ENCODE measurements at regions of chr10 and their contacts with region 1.

Region 1: DNA sequence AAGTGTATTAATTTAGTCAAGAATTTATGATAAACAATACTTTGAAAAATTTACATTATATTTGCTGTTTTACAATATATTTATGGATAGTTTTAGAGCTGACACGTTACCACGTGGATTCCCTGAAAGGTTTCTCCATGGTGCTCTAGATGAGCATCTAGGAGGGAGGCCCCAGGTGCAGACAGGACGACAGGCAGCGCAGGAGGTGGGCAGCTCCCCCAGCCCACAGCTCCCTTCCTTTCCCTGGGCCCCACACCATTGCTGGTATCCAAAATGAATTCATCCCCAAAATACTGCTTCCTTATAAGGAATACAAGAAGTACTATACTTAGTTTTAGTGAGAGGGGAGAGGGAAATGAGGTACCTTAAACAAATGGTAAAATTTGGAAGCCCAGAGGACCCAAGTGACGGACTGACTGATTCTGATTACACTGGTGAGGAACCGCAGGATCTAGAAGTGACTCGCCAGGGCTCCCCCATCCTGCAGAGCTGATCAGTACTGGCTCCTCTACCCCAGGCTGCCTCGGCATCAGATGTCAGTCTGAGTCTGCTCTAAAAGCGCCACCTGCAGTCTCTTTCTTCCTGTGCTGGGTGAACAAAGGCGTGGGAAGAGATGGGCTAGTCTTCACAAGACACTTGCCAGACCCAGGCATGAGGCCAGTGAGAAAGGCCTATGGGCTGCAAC is 89.2 kb downstream of the DLG5 start:
- DNase-seq: peak; percentile 66
- H3K4me3 Mint-ChIP-seq: no peak overlapping the region
- H3K27ac Mint-ChIP-seq: peak overlapping the region; percentile 53
- H3K4me1 Mint-ChIP-seq: peaks cover 8% of the 10 kb centered on the region
- H3K27me3 Mint-ChIP-seq: no peaks in the 10 kb centered on the region

Region 2: DNA sequence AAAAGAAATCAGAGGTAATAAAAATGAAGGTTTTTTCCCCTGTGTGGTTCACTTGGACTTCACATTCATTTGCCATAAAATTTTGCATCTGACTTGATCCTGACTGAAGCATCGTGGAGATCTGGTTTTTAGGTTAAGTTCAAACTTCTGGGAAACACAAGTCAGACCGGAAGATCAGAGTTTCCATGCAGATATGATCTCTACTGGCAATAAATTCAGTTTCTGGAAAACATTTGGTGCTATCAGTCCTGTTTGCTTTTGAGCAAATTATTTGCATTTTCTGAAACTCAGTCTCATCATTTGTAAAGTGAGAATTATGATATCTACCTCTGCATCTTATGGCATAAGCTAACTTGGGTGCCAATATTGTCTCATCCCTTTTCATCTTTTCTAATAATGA is 118.4 kb before region 1 on chr10:
- intact Hi-C with region 1: loop called (anchors 1 kb)
- DNase-seq: no peak
- H3K4me3 Mint-ChIP-seq: no peak overlapping the region
- H3K27ac Mint-ChIP-seq: no peak overlapping the region
- H3K4me1 Mint-ChIP-seq: peaks cover 6% of the 10 kb centered on the region
- H3K27me3 Mint-ChIP-seq: peaks cover 4% of the 10 kb centered on the region

Region 3: GRCh38 chr10:77801474-77802161 is 35.8 kb before region 1 on chr10:
- intact Hi-C with region 1: loop called (anchors 1 kb)
- DNase-seq: peak; percentile 19
- H3K4me3 Mint-ChIP-seq: no peak overlapping the region
- H3K27ac Mint-ChIP-seq: peak overlapping the region; percentile 73
- H3K4me1 Mint-ChIP-seq: peaks cover 27% of the 10 kb centered on the region
- H3K27me3 Mint-ChIP-seq: no peaks in the 10 kb centered on the region

Region 4: DNA sequence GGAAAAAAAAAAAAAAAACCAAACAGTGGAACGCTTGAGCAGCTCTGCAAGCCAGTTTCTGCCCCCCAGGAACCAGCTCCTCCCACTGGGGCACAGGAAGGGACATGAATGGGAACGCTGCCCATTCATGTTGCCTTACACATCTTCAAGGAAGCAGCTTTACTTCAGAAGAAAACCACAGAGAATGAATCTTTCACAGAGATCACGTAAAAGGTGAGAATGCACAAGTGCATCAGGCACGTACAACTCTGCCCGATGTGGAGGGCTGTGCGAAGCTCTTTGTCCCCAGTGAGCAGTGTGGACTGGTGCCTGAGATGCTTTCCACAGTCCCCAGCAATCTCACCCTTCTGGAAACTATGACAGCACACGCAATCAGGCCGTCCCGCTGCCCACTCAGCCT is 17.0 kb before region 1 on chr10:
- intact Hi-C with region 1: loop called (anchors 1 kb)
- DNase-seq: no peak
- H3K4me3 Mint-ChIP-seq: peak overlapping the region; percentile 21
- H3K27ac Mint-ChIP-seq: peak overlapping the region; percentile 74
- H3K4me1 Mint-ChIP-seq: peaks cover 17% of the 10 kb centered on the region
- H3K27me3 Mint-ChIP-seq: no peaks in the 10 kb centered on the region

Region 5: GRCh38 chr10:77989081-77989724 is 151.8 kb after region 1 on chr10:
- intact Hi-C with region 1: no loop called
- DNase-seq: no peak
- H3K4me3 Mint-ChIP-seq: no peak overlapping the region
- H3K27ac Mint-ChIP-seq: peak overlapping the region; percentile 12
- H3K4me1 Mint-ChIP-seq: peaks cover 4% of the 10 kb centered on the region
- H3K27me3 Mint-ChIP-seq: no peaks in the 10 kb centered on the region

Measured in activated T-helper 2 cell treated with anti-CD3 and anti-CD28 coated beads, Interferon-gamma antibody, Interleukin-2, Interleukin-4, amounts not matched to agents 10 μg/mL and 5 μg/mL and 100 μg/mL, durations not matched to agents 14 hours and 24 hours and 36 hours (primary cell).